Common myeloid progenitor, CD34-positive (primary cell): ENCODE measurements at regions of chr14 and their contacts with region 1.

Region 1: DNA sequence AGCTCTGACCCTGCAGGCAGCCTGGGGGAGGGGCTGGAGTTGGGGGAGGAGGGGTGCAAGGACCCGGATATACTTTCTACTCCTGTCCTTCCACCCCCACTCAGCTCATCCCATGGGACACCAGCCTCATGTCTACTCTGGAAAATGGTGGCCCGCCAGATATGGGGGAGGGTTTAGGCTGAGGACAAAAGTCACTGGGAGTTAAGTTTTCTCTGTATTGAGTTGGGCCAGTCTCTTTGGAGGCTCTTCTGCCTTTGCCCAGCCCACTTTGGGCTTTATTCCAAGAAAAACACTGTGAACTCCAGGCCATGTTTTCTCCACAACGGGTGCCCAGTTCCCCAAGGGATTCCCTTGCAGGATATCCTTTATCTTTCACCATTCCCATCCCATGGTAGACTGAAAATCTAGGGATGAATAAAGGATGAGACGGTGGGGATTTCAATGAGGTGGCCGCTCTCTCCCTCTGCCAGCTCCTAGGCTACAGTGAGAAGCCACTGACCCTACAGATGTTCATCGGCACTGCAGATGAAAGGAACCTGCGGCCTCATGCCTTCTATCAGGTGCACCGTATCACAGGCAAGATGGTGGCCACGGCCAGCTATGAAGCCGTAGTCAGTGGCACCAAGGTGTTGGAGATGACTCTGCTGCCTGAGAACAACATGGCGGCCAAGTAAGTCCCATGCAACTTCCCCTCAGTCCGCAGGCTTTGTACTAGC is 4.9 kb downstream of the NFATC4 start:
- DNase-seq: no peak
- H3K4me3 ChIP-seq: no peak overlapping the region
- H3K27ac ChIP-seq: no peak overlapping the region
- H3K4me1 ChIP-seq: peaks cover 0 to 31% (median 23%) of the 10 kb centered on the region in 4 experiments
- H3K27me3 ChIP-seq: peaks cover 0 to 4% (median 0%) of the 10 kb centered on the region in 5 experiments

Region 2: DNA sequence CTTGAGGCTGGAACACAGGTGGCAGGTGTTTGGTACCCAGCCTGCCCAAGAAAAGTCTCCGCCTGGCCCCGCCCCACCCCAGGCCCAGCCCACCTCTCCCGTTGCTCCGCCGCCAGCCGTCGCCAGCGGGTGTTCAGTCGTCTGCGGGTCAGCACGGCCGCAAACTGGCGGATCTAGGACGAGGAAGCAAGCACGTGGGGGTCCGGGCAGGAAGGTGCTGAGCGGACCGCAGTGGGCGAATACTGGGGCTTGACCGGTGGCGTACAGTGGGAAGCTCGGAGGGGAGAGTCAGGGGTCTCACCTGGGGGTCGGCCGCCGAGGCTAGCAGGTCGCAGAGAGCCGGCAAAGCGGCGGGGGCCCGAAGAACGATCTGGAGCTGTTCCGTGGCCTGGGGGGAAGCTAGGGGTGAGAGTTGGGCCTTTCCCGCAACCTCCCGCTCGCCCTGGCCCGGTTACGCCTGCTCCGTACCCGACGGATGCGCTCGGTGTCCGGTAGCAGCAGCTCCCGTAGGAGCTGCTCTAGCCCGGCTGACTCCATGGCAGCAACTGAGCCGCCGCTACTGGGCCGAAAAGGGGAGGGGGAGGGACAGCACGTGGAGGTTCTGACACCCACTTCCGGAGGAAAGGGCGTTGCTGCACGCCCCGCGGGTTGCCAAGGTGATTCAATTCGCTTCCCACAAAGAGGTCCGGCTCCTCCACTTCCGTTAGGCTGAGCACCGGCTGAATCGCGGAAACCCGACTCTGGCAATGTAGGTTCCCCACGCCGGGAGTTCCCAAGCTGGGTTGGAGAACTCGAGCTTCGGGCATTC is 184.4 kb before region 1 on chr14 and contains the start of gene IPO4:
- CTCF ChIA-PET with region 1: no interaction called
- POLR2A ChIA-PET with region 1: no interaction called
- DNase-seq: peak; percentile 98
- H3K4me3 ChIP-seq: peak within 1 kb of the TSS; percentile 65 to 90 (median 79)
- H3K27ac ChIP-seq: peak within 1 kb of the TSS; percentile 46 to 77
- H3K4me1 ChIP-seq: peaks cover 0 to 25% (median 20%) of the 10 kb centered on the region in 4 experiments
- H3K27me3 ChIP-seq: no peaks in the 10 kb centered on the region

Region 3: DNA sequence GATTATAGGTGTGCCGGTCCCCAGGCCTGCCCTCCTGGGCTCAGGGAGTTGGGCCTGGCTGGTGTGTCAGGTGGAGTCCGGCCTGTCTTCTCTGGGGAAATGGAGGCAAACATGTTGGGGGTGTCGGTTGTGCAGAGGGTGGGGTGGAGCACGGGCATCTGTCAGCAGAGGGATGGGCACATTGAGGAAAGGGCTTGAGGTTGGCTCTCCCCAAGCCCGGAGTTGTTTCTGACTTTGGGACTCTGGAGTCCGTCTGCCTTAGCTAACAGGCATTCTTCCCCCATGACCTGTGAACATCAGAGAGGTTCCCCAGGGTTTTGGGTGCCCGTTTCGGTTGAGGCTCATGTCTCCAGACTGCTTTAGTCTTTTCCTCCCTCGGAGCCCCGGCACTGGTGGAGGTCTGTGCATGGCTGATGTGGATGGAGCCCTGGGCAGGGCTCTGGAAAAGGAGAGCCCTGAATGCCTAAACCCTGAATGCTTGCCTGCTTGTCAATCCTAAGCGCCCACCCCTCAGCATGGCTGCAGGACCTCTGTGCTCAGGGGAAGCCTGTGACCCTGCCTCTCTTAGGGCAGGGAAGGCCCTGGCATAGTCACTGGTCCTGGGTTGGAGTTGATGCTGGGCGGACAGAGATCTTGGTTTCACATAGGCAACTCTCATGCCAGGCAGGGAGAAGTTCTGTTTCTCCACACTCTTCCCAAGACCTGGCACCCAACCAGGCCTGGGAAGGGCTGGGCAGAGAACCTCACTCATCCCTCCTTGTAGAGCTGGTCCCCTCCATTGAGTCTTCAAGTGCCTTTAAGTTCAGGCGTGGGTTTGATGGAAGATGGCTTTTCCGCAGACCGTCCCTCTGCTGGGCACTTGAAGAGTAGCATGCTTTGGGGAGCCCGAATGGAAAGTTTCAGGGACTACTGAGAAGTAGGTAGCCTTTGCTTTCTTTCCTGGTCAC is 38.9 kb after region 1 on chr14:
- CTCF ChIA-PET with region 1: interaction called, 55 read pairs
- POLR2A ChIA-PET with region 1: no interaction called
- DNase-seq: peak; percentile 64 to 78 (median 76)
- H3K4me3 ChIP-seq: no peak overlapping the region
- H3K27ac ChIP-seq: no peak overlapping the region
- H3K4me1 ChIP-seq: no peaks in the 10 kb centered on the region
- H3K27me3 ChIP-seq: no peaks in the 10 kb centered on the region

Region 4: DNA sequence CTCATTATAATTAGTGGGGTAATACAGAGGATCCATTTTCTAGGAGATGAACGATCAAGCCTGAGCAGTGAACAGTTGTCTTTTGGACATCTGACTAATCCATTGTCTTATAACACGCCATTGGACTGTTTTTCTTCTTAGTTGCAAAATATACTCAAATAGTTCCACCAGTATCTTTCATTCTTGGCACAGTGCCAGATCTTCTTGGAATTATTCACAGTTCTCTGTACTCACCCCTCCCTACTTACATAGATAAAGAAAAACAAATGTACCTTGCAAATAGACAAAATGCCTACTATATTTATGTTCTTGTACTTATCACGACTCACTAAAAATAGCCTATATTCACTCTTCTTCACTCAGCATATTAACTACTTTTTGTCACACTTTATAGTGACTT is 52.8 kb after region 1 on chr14:
- CTCF ChIA-PET with region 1: interaction called, 21 read pairs
- POLR2A ChIA-PET with region 1: no interaction called
- DNase-seq: peak in 2 of 3 donors; percentile 40 to 47
- H3K4me3 ChIP-seq: no peak overlapping the region
- H3K27ac ChIP-seq: no peak overlapping the region
- H3K4me1 ChIP-seq: peaks cover 24 to 75% (median 63%) of the 10 kb centered on the region in 4 experiments
- H3K27me3 ChIP-seq: peaks cover 0 to 3% (median 0%) of the 10 kb centered on the region in 5 experiments

Region 5: DNA sequence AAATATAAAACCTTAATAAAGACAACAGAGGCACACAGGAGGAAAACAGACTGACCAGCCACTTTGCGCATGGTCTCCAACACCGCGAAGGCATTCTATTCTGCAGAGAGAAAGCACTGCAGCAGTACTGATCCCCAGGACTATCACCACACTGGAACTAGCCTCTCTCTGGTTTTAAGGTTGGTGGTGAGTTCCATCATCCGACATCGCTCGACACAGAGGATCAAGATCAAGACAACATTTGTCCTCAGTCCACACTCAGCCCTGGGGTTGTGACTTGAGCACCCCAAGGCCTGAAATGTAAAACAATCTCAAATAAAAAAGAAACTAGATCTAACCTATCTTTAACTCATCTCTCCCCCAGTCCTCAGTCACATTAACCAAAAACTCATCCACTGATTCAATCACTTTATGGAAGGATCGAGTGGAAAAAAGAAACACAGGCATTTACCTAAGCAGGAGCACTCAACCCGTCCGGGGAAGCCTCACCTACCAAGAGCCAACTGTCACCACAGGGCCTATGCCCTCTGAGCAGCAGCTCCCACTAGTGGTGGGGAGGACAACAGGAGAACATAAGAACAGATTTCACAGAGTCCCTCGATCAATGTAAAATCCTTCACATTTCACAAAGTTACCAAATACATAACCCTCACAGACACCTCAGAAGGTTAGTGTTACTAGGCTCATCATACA is 659.4 kb after region 1 on chr14:
- CTCF ChIA-PET with region 1: no interaction called
- POLR2A ChIA-PET with region 1: no interaction called
- DNase-seq: no peak
- H3K4me3 ChIP-seq: no peak overlapping the region
- H3K27ac ChIP-seq: no peak overlapping the region
- H3K4me1 ChIP-seq: no peaks in the 10 kb centered on the region
- H3K27me3 ChIP-seq: no peaks in the 10 kb centered on the region